ENCODE measurements at regions of chr22 and their contacts with region 1.

Region 1: GRCh38 chr22:37148742-37149665 is 712 bp downstream of the IL2RB start:
- DNase-seq: no peak
- ATAC-seq: no peak
- H3K4me3 ChIP-seq: no peak overlapping the region
- H3K27ac ChIP-seq: no peak overlapping the region
- H3K4me1 ChIP-seq: 0 out of 2 replicates have a peak, but pooled peaks cover 15% of the 10 kb centered on the region
- H3K27me3 ChIP-seq: peaks cover 5 to 30% of the 10 kb centered on the region in 2 experiments
- CTCF ChIP-seq: no peak
- EP300 ChIP-seq: no peak
- POLR2A ChIP-seq: no peak
- RAD21 ChIP-seq: no peak

Region 2: GRCh38 chr22:37077884-37078485 is 71.0 kb before region 1 on chr22:
- CTCF ChIA-PET with region 1: no interaction called
- POLR2A ChIA-PET with region 1: no interaction called
- in situ Hi-C with region 1: no loop called
- intact Hi-C with region 1: loop called (anchors 5 kb)
- DNase-seq: peak; percentile 29
- ATAC-seq: peak; percentile 70
- H3K4me3 ChIP-seq: no peak overlapping the region
- H3K27ac ChIP-seq: no peak overlapping the region
- H3K4me1 ChIP-seq: peaks cover 22% of the 10 kb centered on the region; the same call in 1 of the 2 replicates
- H3K27me3 ChIP-seq: no peaks in the 10 kb centered on the region; a peak in 1 of 5 replicates
- CTCF ChIP-seq: peak; percentile 87
- EP300 ChIP-seq: no peak
- POLR2A ChIP-seq: no peak
- RAD21 ChIP-seq: peak; percentile 86